ENCODE measurements at regions of chr17 and their contacts with region 1.

Region 1: DNA sequence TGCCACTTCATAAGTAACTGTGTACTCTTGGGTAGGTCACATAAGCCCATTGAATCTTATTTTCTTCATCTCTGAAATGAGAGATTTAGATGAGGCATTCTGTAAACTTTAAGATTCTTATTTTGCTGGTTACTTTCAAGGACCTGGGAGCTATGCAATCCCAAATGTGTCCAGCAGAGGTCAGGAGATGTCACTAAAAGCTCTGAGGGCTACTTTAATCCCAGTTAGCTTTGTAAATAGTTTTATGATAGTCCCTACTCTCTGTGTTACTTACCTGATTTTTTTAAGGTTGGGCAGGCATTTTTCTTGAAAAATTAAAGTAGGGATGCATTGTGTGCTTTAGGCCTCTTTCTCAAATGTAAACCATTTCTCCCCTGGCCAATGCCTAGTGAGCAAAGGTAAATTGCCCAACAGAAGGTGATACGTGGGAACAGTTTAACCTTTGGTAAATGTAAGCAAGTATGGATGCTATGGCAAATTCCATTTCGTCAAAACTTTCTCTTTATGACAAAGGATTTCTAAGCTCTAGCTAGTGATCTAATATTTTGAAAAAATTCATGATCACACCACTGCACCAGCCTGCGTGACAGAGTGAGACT is 57.1 kb upstream of the WSB1 start:
- DNase-seq: peak in 4 of 5 donors; percentile 60 to 81 (median 63)
- ATAC-seq: peak; percentile 41 to 81 (median 67)
- H3K4me3 ChIP-seq: no peak overlapping the region
- H3K27ac ChIP-seq: no peak overlapping the region
- H3K4me1 ChIP-seq: peaks cover 0 to 59% (median 0%) of the 10 kb centered on the region in 12 donors
- H3K27me3 ChIP-seq: no peaks in the 10 kb centered on the region
- CTCF ChIP-seq: peak; percentile 88 to 98 (median 94)
- POLR2A ChIP-seq: no peak

Region 2: DNA sequence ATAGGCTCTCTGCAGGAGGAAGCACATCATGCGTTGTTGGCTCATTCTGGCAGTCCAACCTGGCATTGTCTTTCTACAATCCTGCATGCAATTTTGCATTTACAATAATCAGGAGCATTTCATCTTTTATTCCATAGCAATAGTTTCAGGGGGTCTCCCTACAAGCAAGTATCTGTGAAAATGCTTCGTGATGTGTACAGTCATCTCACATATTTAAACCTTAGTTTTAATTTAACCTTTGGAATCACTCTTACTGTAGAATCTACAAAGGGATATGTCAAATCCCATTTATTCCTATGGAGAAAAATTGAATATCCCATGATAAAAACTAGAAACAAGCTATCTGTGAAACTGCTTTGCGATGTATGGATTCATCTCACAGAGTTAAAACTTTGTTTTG is 54.9 kb before region 1 on chr17:
- intact Hi-C with region 1: no loop called
- DNase-seq: no peak
- ATAC-seq: no peak
- H3K4me3 ChIP-seq: no peak overlapping the region
- H3K27ac ChIP-seq: no peak overlapping the region
- H3K4me1 ChIP-seq: no peaks in the 10 kb centered on the region
- H3K27me3 ChIP-seq: no peaks in the 10 kb centered on the region
- CTCF ChIP-seq: no peak
- POLR2A ChIP-seq: no peak

Region 3: GRCh38 chr17:27306276-27306835 is 69.5 kb after region 1 on chr17:
- intact Hi-C with region 1: no loop called
- DNase-seq: no peak
- ATAC-seq: no peak
- H3K4me3 ChIP-seq: no peak overlapping the region
- H3K27ac ChIP-seq: no peak overlapping the region
- H3K4me1 ChIP-seq: peaks cover 0 to 57% (median 20%) of the 10 kb centered on the region in 12 donors
- H3K27me3 ChIP-seq: no peaks in the 10 kb centered on the region
- CTCF ChIP-seq: no peak
- POLR2A ChIP-seq: no peak

Region 4: DNA sequence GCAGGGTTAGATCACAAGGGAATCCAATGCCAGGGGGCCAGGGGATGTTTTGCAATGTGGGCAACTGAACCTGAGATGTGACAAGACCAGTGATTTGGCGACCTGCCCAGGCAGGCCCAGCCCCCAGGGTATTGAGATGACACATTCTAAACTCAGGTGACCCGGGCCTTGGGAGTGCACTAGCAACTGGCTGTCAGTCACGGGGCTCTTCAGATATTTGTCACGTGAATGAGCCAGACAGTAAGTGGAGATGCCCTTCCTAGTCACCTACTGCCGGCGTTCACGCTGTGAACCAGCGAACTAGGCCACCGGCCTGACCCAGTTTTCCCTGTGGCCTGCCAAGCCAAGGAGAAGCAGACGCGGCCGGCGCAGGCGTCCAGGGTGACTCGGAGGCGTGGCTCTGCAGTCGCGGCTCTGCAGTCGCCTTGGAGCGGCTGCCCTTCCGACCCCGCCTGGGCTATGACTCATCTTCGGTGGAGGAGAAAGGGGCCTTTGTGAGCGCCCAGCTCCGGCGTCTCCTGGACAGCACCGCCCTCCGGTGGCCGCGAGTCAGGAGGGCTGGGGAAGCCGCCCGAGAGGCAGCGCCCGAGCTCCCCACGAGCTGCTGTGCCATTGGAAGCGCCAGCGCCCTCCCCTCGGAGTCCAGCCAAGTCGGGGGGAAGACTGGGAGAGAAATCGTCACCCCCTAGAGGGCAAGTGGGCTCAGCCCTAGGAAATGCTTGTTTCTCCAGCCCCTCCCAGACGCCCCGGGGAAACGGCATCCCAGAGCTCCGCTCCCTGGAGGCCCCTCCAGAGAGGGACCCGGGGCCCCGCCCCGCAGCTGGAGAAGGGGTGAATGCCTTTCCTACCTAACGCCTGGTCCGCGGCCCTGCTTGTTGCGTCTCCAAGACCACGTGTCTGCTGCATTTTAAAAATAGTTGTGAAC is 95.9 kb after region 1 on chr17:
- intact Hi-C with region 1: loop called in 3 of 10 experiments (anchors 2 to 5 kb)
- DNase-seq: peak; percentile 98 to 100 (median 99)
- ATAC-seq: peak; percentile 95 to 97 (median 96)
- H3K4me3 ChIP-seq: peak overlapping the region in 11 of 12 donors; percentile 29 to 69 (median 57)
- H3K27ac ChIP-seq: peak overlapping the region; percentile 92 to 99 (median 96)
- H3K4me1 ChIP-seq: peaks cover 0 to 35% (median 19%) of the 10 kb centered on the region in 12 donors
- H3K27me3 ChIP-seq: no peaks in the 10 kb centered on the region
- CTCF ChIP-seq: peak; percentile 82 to 99 (median 93)
- POLR2A ChIP-seq: peak in 1 of 2 donors; percentile 48

Region 5: GRCh38 chr17:27381007-27381501 is 144.2 kb after region 1 on chr17:
- intact Hi-C with region 1: loop called in 2 of 10 experiments (anchors 2 to 5 kb)
- DNase-seq: peak; percentile 73 to 89 (median 75)
- ATAC-seq: peak; percentile 24 to 76 (median 68)
- H3K4me3 ChIP-seq: peak overlapping the region in 3 of 12 donors; percentile 36 to 41 (median 40)
- H3K27ac ChIP-seq: peak overlapping the region in 1 of 12 donors; percentile 73
- H3K4me1 ChIP-seq: peaks cover 0 to 31% (median 20%) of the 10 kb centered on the region in 12 donors
- H3K27me3 ChIP-seq: no peaks in the 10 kb centered on the region
- CTCF ChIP-seq: peak; percentile 74 to 95 (median 86)
- POLR2A ChIP-seq: no peak

Region 6: GRCh38 chr17:27654654-27655524 is 418.1 kb after region 1 on chr17:
- intact Hi-C with region 1: loop called in 7 of 10 experiments (anchors 5 to 10 kb)
- DNase-seq: peak; percentile 50 to 82 (median 69)
- ATAC-seq: peak in 3 of 4 donors; percentile 35 to 46 (median 40)
- H3K4me3 ChIP-seq: no peak overlapping the region
- H3K27ac ChIP-seq: no peak overlapping the region
- H3K4me1 ChIP-seq: peaks cover 0 to 5% (median 0%) of the 10 kb centered on the region in 12 donors
- H3K27me3 ChIP-seq: no peaks in the 10 kb centered on the region
- CTCF ChIP-seq: peak; percentile 83 to 99 (median 92)
- POLR2A ChIP-seq: no peak

Measured in heart left ventricle (tissue), 16 donors.